Heart left ventricle (tissue), 16 donors: ENCODE measurements at regions of chr3 and their contacts with region 1.

Region 1: GRCh38 chr3:13895155-13896105 is 15.6 kb upstream of the WNT7A start:
- DNase-seq: peak; percentile 93 to 97 (median 94)
- ATAC-seq: peak; percentile 99
- H3K4me3 ChIP-seq: peak overlapping the region; percentile 32 to 78 (median 66)
- H3K27ac ChIP-seq: peak overlapping the region in 9 of 12 donors; percentile 22 to 83 (median 66)
- H3K4me1 ChIP-seq: peaks cover 0 to 27% (median 12%) of the 10 kb centered on the region in 12 donors
- H3K27me3 ChIP-seq: no peaks in the 10 kb centered on the region
- CTCF ChIP-seq: no peak
- POLR2A ChIP-seq: peak; percentile 18 to 80

Region 2: DNA sequence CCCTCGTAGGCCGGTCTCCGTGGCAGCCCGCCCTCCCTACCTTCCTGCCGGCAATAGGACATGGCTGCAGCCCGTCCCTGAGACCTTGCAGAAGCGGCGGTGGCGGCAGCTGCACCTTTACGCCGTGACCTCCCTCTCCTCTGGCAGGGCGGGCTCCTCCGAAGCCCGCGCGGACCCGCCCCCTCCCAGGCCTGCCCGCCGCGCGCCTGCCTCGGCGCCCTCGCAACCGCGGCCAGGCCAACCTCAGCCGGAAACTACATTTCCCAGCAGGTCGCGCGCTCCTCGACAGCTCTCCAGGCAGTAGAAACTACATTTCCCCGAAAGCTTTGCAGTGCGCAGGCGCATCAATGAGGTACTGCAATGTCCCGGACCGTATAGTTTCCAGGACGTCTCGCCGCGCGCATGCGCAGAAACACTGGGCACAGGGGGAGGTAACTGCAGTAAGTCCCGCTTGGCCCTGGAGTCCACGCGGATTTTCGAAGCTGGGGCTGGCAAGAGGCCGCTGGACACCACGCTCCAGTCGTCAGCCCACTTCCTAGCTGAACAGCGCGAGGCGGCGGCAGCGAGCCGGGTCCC is 229.3 kb after region 1 on chr3 and contains the starts of genes CHCHD4 and TMEM43:
- intact Hi-C with region 1: loop called in 8 of 10 experiments (anchors 5 to 10 kb)
- DNase-seq: peak; percentile 99 to 100 (median 100)
- ATAC-seq: peak; percentile 89 to 95 (median 92)
- H3K4me3 ChIP-seq: peak within 1 kb of the TSS; percentile 68 to 91 (median 85)
- H3K27ac ChIP-seq: peak within 1 kb of the TSS; percentile 88 to 96 (median 92)
- H3K4me1 ChIP-seq: peaks cover 9 to 48% (median 32%) of the 10 kb centered on the region in 12 donors
- H3K27me3 ChIP-seq: no peaks in the 10 kb centered on the region
- CTCF ChIP-seq: peak in 1 of 12 donors; percentile 21
- POLR2A ChIP-seq: peak in 1 of 2 donors; percentile 79
- total RNA-seq, gene CHCHD4: 14.8 to 31.1 (median 25.9) TPM
- total RNA-seq, gene TMEM43: 30.5 to 98.6 (median 46.0) TPM

Region 3: DNA sequence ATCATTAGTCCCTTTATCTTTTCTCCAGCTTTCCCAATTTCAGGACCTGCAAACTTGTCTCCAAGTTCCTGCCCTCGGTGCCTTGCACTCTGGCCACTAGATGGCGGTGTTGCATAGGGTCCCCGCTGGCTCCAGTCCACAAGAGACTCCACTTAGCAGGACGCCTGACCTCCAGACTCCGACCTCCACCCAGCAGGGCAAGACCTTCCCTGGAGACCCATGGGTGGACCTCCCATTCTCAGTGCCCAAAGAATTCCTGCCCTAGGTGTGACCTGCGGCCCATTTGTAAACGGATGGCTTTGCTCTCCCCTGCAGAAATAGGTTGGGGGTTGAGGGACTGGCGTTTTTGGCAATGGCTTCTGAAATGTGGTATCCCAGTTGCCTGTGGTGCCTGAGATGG is 365.8 kb after region 1 on chr3:
- intact Hi-C with region 1: loop called in 1 of 10 experiments (anchors 10 kb)
- DNase-seq: peak; percentile 81 to 90 (median 85)
- ATAC-seq: peak; percentile 79 to 90 (median 88)
- H3K4me3 ChIP-seq: no peak overlapping the region
- H3K27ac ChIP-seq: no peak overlapping the region
- H3K4me1 ChIP-seq: peaks cover 0 to 10% (median 1%) of the 10 kb centered on the region in 12 donors
- H3K27me3 ChIP-seq: peaks cover 0 to 7% (median 3%) of the 10 kb centered on the region in 9 donors
- CTCF ChIP-seq: peak; percentile 93 to 99 (median 96)
- POLR2A ChIP-seq: no peak

Region 4: GRCh38 chr3:14426063-14426620 is 530.7 kb after region 1 on chr3:
- intact Hi-C with region 1: no loop called
- DNase-seq: peak in 1 of 5 donors; percentile 43
- ATAC-seq: no peak
- H3K4me3 ChIP-seq: peak overlapping the region in 1 of 12 donors; percentile 8
- H3K27ac ChIP-seq: peak overlapping the region in 1 of 12 donors; percentile 80
- H3K4me1 ChIP-seq: peaks cover 0 to 91% (median 13%) of the 10 kb centered on the region in 12 donors
- H3K27me3 ChIP-seq: peaks cover 0 to 19% (median 0%) of the 10 kb centered on the region in 9 donors
- CTCF ChIP-seq: peak in 1 of 12 donors; percentile 6
- POLR2A ChIP-seq: no peak

Region 5: GRCh38 chr3:14461748-14462324 is 566.4 kb after region 1 on chr3:
- intact Hi-C with region 1: loop called (anchors 5 to 10 kb)
- DNase-seq: peak; percentile 48 to 74 (median 60)
- ATAC-seq: peak in 3 of 4 donors; percentile 44 to 48 (median 45)
- H3K4me3 ChIP-seq: no peak overlapping the region
- H3K27ac ChIP-seq: peak overlapping the region in 3 of 12 donors; percentile 5 to 16 (median 14)
- H3K4me1 ChIP-seq: peaks cover 0 to 51% (median 19%) of the 10 kb centered on the region in 12 donors
- H3K27me3 ChIP-seq: peaks cover 0 to 8% (median 0%) of the 10 kb centered on the region in 9 donors
- CTCF ChIP-seq: peak; percentile 22 to 65 (median 50)
- POLR2A ChIP-seq: no peak